T-cell (primary cell): ENCODE measurements at regions of chr13 and their contacts with region 1.

Region 1: GRCh38 chr13:25301347-25302047 is at the start of gene NUP58:
- DNase-seq: peak; percentile 83 to 97 (median 92)
- ATAC-seq: peak; percentile 98 to 100 (median 99)
- H3K4me3 ChIP-seq: peak within 1 kb of the TSS; percentile 83 to 91
- H3K4me3 Mint-ChIP-seq: peak within 1 kb of the TSS; percentile 88 to 91 (median 89)
- H3K27ac ChIP-seq: peak within 1 kb of the TSS; percentile 93
- H3K27ac Mint-ChIP-seq: peak within 1 kb of the TSS; percentile 93 to 94
- H3K4me1 ChIP-seq: peaks cover 12 to 16% of the 10 kb centered on the region in 2 experiments
- H3K4me1 Mint-ChIP-seq: peaks cover 34 to 43% (median 40%) of the 10 kb centered on the region in 3 donors
- H3K27me3 ChIP-seq: peaks cover 2 to 8% of the 10 kb centered on the region in 2 experiments
- H3K27me3 Mint-ChIP-seq: peaks cover 5 to 6% of the 10 kb centered on the region in 2 donors
- total RNA-seq, gene NUP58: 33.2 to 59.1 (median 37.3) TPM

Region 2: GRCh38 chr13:24931450-24932251 is 369.8 kb before region 1 on chr13:
- CTCF ChIA-PET with region 1: no interaction called
- POLR2A ChIA-PET with region 1: no interaction called
- DNase-seq: no peak
- ATAC-seq: no peak
- H3K4me3 ChIP-seq: no peak overlapping the region
- H3K4me3 Mint-ChIP-seq: no peak overlapping the region
- H3K27ac ChIP-seq: no peak overlapping the region
- H3K27ac Mint-ChIP-seq: no peak overlapping the region
- H3K4me1 ChIP-seq: peaks cover 0 to 4% of the 10 kb centered on the region in 2 experiments
- H3K4me1 Mint-ChIP-seq: no peaks in the 10 kb centered on the region
- H3K27me3 ChIP-seq: peaks cover 9 to 21% of the 10 kb centered on the region in 2 experiments
- H3K27me3 Mint-ChIP-seq: peaks cover 44 to 47% of the 10 kb centered on the region in 2 donors

Region 3: DNA sequence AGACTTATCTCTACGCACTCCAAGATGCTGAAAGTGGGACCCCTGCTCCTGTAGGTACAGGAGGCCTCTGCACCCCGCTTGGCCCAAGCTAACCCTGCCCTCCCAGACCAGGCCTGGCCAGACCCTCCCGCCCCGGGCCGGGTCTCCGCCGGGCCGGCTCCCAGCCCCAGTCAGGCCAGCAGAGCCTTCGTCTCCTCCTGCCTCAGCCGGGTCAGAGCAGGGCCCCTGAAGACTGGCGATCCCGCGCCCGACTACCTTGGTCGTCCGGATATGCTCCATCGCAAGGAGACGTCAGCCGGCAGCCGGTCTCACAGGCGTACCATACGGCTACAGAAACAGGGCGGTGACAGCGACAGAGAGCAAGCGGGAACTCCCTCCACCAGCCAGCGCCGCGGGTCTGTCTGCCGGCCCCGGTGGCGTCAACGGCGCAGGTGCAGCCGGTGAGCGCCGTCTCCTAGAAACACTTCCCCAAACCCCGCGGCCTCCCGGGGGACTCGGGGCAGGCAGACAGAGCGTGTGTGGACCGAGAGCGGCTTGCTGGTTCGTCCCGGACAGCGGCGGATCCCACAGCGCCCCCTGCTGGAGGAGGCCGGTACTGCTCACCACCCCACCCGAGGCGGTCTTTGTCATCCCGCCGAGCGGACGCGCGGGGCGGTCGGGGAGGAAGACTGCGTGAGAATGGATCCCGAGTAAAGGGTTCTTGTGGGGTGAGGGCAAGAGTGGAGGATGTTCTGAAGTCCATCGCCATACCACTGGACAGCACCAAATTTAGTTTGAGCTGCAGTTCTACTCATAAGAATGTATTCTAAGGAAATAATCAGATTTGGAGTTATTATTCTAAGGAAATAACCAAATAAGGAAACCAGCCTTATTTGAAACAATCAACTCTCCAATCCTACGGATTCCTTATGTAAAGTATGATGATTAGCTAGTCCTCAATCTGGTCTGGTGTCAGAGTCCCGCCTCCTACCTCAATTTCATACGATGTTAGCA is 14.2 kb before region 1 on chr13 and contains the start of gene MTMR6:
- CTCF ChIA-PET with region 1: interaction called, 4 to 13 read pairs
- POLR2A ChIA-PET with region 1: interaction called, 4 to 8 read pairs
- DNase-seq: peak; percentile 81 to 96 (median 89)
- ATAC-seq: peak; percentile 87 to 95 (median 90)
- H3K4me3 ChIP-seq: peak within 1 kb of the TSS; percentile 91 to 94
- H3K4me3 Mint-ChIP-seq: peak within 1 kb of the TSS; percentile 88 to 100 (median 91)
- H3K27ac ChIP-seq: peak within 1 kb of the TSS; percentile 93
- H3K27ac Mint-ChIP-seq: peak within 1 kb of the TSS; percentile 86 to 95
- H3K4me1 ChIP-seq: peaks cover 11 to 13% of the 10 kb centered on the region in 2 experiments
- H3K4me1 Mint-ChIP-seq: peaks cover 42 to 57% (median 53%) of the 10 kb centered on the region in 3 donors
- H3K27me3 ChIP-seq: no peaks in the 10 kb centered on the region
- H3K27me3 Mint-ChIP-seq: peaks cover 0 to 9% of the 10 kb centered on the region in 2 donors
- total RNA-seq, gene MTMR6: 15.6 to 19.2 (median 16.3) TPM

Region 4: DNA sequence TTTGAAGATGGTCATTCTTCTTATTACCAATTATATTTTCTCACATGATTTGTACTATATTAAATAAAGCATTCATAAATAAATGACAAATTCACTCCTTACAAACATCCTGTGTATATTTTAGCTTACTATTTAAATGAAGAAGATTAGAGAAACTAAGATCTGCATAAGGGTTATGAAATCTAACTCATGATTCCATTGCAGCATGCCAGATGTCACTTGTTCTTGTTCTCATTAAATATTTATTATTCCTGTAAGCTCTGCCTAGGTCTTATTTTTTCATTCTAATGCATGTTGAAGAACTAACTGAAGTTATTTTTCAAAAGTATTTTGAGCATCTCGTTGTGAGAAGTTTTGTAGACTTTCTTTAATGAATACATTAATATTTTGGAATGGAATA is 18.3 kb after region 1 on chr13:
- CTCF ChIA-PET with region 1: no interaction called
- POLR2A ChIA-PET with region 1: interaction called, 3 to 10 read pairs
- DNase-seq: no peak
- ATAC-seq: no peak
- H3K4me3 ChIP-seq: no peak overlapping the region
- H3K4me3 Mint-ChIP-seq: no peak overlapping the region
- H3K27ac ChIP-seq: no peak overlapping the region
- H3K27ac Mint-ChIP-seq: no peak overlapping the region
- H3K4me1 ChIP-seq: no peaks in the 10 kb centered on the region
- H3K4me1 Mint-ChIP-seq: peaks cover 0 to 3% (median 0%) of the 10 kb centered on the region in 3 donors
- H3K27me3 ChIP-seq: no peaks in the 10 kb centered on the region
- H3K27me3 Mint-ChIP-seq: no peaks in the 10 kb centered on the region